Esophagus muscularis mucosa (tissue), 4 donors: ENCODE measurements at regions of chr4 and their contacts with region 1.

Region 1: DNA sequence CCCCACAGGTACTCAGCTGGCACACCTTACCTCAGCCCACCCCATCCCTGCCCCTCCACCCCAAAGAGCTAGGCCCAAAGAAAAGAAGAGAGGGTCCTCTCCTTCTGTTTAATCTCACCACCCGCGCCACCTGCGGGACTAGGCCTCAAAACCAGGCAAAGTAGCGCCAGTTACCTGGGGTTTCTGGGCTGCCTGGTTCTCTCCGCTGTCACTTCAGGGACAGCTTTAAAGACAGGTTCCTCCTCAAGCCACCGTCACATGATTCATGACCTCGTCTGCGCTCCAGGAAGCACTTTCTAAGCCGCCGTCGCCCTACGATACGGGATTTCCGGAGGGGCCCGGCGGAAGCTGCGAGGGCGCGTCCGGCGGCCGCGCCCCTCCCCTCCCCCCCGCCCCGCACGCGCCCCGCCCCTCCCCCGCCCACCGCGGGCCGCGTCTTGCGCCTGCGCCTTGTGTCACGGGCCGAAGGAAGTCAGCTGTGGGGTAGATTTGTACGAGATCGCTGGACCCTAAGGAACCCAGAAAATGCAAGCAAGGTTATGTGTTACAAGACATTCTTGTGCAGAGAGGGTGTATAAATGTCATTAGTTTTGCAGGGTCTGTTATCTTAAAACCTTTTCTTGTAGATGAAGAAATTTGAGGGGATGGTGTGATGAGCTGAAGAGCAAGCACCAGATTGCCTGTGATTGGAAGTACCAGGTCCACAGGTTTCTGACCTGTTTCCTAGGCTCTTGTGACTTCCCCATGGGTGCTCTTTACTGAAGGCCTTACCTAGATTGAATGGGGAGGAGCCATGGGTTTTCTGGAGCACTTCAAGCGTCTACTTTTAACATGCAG is at the start of gene LAMTOR3:
- DNase-seq: peak; percentile 97
- H3K4me3 ChIP-seq: peak within 1 kb of the TSS; percentile 89 to 97 (median 92)
- H3K27ac ChIP-seq: peak within 1 kb of the TSS; percentile 84 to 90 (median 89)
- H3K4me1 ChIP-seq: peaks cover 30 to 46% (median 45%) of the 10 kb centered on the region in 4 donors
- H3K27me3 ChIP-seq: no peaks in the 10 kb centered on the region
- CTCF ChIP-seq: no peak
- EP300 ChIP-seq: no peak
- POLR2A ChIP-seq: no peak
- total RNA-seq, gene LAMTOR3: 22.6 to 50.3 (median 44.5) TPM

Region 2: DNA sequence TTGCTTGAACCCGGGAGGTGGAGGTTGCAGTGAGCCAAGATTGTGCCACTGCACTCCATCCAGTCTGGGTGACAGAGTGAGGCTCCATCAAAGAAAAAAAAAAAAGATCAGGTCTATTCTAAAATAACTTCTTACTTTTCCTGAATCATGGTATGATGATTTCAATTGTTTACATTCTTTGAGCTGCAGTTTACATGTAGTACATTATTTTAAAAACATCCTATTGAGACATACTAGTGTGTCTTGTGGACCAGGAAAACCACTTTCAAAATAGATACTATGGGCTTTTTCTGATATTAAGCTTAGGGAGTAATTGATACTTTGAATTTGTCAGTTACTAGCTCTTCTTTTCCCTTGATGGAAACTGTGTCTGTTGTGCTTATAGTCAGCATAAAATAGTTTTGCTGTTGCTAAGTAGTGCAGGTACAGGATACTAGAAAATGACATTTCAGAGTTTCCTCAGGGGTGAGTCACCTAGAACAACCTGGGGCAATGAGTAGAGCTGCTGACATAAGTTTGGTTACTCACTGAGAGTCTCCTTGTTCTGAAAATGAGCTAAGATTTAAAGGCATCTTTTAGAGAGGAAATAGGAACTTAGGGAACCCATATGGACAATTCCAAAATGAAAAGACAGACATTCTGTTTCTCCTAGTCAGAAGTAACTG is 183.6 kb before region 1 on chr4:
- intact Hi-C with region 1: no loop called
- DNase-seq: no peak
- H3K4me3 ChIP-seq: no peak overlapping the region
- H3K27ac ChIP-seq: peak overlapping the region in 2 of 4 donors; percentile 21 to 34
- H3K4me1 ChIP-seq: peaks cover 0 to 22% (median 10%) of the 10 kb centered on the region in 4 donors
- H3K27me3 ChIP-seq: no peaks in the 10 kb centered on the region
- CTCF ChIP-seq: no peak
- EP300 ChIP-seq: no peak
- POLR2A ChIP-seq: no peak

Region 3: GRCh38 chr4:99806545-99806944 is 87.8 kb before region 1 on chr4:
- intact Hi-C with region 1: no loop called
- DNase-seq: no peak
- H3K4me3 ChIP-seq: no peak overlapping the region
- H3K27ac ChIP-seq: no peak overlapping the region
- H3K4me1 ChIP-seq: peaks cover 0 to 26% (median 25%) of the 10 kb centered on the region in 4 donors
- H3K27me3 ChIP-seq: no peaks in the 10 kb centered on the region
- CTCF ChIP-seq: no peak
- EP300 ChIP-seq: no peak
- POLR2A ChIP-seq: no peak

Region 4: DNA sequence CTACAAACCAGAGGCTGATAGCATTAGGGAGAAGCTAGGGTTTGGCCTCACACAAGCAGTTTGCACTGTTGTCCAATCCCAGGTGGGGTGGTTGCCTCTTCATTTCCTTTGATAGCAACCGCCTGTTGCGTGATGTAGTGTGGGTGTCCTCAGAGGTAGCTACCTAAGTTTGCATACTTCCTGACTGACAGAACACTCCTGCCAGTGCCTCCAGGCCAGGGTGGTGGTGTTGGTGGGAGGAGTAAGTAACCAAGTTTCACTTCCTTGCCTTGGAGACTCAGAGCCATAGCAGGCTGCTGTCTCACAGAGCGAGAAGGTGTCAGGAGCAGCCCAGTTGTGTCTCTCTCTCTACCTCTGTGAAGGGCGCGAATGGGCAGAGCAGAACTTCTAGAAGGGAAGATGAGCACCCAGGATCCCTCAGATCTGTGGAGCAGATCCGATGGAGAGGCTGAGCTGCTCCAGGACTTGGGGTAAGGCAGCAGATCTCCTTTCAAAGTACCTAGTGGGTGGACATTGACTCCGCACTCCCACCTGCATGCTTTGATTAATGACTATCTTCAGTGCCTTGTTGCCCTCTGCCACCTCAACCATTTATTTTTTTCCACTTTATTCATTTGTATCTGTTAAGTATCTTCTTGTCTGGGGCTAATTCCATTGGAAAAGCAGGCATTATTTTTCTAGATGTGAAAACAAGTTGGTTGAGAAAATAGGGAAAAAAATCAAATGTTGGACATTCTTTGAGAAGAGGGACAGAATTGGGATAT is 77.7 kb before region 1 on chr4 and contains the start of gene DAPP1:
- intact Hi-C with region 1: loop called (anchors 5 kb)
- DNase-seq: no peak
- H3K4me3 ChIP-seq: peak within 1 kb of the TSS in 3 of 4 donors; percentile 8 to 45 (median 18)
- H3K27ac ChIP-seq: no peak within 1 kb of the TSS
- H3K4me1 ChIP-seq: peaks cover 0 to 16% (median 9%) of the 10 kb centered on the region in 4 donors
- H3K27me3 ChIP-seq: no peaks in the 10 kb centered on the region
- CTCF ChIP-seq: no peak
- EP300 ChIP-seq: no peak
- POLR2A ChIP-seq: no peak
- total RNA-seq, gene DAPP1: 0.86 to 2.5 (median 1.1) TPM